Activated B cell treated with CpG ODN at 0.5 μM for 24 hours (primary cell): ENCODE measurements at regions of chr6 and their contacts with region 1.

Region 1: DNA sequence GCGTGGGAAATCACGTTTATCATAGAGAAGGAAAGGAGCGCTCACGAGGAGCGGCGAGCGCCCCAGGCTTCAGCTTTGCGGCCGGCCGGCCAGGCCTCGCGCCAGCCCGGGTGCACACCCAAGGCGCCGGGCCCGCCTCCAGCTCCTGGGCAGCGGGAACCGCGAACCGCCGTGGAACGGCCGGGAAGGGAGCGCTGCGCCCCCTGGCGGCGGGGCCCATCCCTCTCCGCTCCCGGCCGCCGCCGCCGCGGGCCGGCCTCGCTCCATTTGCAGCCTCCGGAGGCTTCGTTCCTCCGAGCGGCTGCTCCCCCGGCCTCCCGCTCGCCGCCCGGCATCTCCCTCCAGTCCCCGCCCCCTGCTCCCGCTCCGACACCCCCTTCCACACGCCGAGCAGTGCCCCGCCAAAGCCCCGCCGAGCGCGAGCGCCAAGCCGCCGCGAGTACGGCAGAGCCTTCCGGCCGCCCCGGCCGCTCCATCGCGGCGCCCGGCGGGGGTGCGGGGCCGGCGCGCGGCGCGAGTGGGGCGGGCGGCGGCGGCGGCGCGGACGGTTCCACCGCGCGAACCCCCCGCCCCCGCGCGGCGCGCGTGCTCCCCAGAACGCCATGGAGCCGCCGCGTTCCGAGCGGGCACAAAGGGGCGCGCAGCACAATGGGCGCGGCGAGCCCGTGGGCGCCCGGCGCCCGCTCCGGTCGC is 956 bp downstream of the BEND3 start:
- DNase-seq: peak; percentile 79
- ATAC-seq: peak; percentile 51
- H3K4me3 Mint-ChIP-seq: peak overlapping the region; percentile 82
- H3K27ac Mint-ChIP-seq: no peak overlapping the region
- H3K4me1 Mint-ChIP-seq: peaks cover 19% of the 10 kb centered on the region
- H3K27me3 Mint-ChIP-seq: peaks cover 5% of the 10 kb centered on the region
- CTCF ChIP-seq: no peak

Region 2: GRCh38 chr6:106097411-106098231 is 1016.7 kb before region 1 on chr6:
- CTCF ChIA-PET with region 1: no interaction called
- POLR2A ChIA-PET with region 1: no interaction called
- intact Hi-C with region 1: loop called (anchors 10 kb)
- DNase-seq: no peak
- ATAC-seq: peak; percentile 74
- H3K4me3 Mint-ChIP-seq: peak overlapping the region; percentile 89
- H3K27ac Mint-ChIP-seq: peak overlapping the region; percentile 94
- H3K4me1 Mint-ChIP-seq: peaks cover 84% of the 10 kb centered on the region
- H3K27me3 Mint-ChIP-seq: no peaks in the 10 kb centered on the region
- CTCF ChIP-seq: no peak

Region 3: DNA sequence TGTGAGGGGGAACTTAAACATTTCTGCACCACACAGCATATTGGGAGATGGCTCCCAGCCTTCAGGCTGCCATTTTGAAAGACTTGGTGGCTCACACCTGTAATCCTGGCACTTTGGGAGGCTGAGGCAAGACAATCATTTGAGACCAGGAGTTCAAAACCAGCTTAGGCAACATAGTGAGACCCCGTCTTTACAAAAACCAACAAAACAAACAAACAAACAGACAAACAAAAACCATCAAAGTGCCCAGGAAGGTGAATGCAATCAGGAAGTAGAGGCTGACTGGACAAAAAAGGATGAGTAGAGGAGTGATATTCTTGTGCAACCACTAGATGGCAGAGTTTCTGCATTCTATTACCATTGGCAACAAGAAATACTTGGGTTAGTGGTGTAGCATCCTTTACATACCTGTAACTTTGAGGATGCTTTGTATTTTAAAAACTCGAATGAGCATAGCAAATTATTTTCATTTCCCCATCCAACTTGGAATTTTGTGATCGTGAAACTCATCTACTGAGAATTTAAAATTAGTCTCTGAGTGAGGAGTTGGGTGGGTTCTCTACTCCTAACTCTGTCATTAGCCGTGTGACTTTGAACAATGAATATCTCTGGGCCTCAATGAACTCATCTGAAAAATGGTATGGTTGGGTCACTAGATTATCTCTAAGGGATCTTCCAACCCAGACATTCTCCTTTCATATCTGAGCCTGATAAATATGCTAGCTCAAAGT is 669.4 kb before region 1 on chr6:
- CTCF ChIA-PET with region 1: interaction called, 3 read pairs
- POLR2A ChIA-PET with region 1: no interaction called
- intact Hi-C with region 1: loop called (anchors 1 kb)
- DNase-seq: no peak
- ATAC-seq: peak; percentile 43
- H3K4me3 Mint-ChIP-seq: no peak overlapping the region
- H3K27ac Mint-ChIP-seq: no peak overlapping the region
- H3K4me1 Mint-ChIP-seq: peaks cover 16% of the 10 kb centered on the region
- H3K27me3 Mint-ChIP-seq: peaks cover 18% of the 10 kb centered on the region
- CTCF ChIP-seq: peak; percentile 25

Region 4: DNA sequence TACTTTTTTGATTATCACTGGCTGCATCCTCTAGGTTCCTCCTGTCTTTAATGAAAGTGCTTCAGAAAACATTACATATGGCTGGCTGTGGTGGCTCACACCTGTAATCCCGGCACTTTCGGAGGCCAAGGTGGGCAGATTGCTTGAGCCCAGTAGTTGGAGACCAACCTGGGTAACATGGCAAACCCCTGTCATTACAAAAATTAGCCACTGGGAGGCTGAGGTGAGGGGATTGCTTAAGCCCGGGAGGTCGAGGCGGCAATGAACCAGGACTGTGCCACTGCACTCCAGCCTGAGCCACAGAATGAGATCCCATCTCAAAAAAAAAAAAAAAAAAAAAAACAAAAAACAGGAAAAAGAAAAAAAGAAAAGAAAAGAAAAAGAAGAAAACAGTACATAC is 34.3 kb before region 1 on chr6:
- CTCF ChIA-PET with region 1: no interaction called
- POLR2A ChIA-PET with region 1: no interaction called
- intact Hi-C with region 1: loop called (anchors 5 kb)
- DNase-seq: no peak
- ATAC-seq: no peak
- H3K4me3 Mint-ChIP-seq: no peak overlapping the region
- H3K27ac Mint-ChIP-seq: no peak overlapping the region
- H3K4me1 Mint-ChIP-seq: peaks cover 6% of the 10 kb centered on the region
- H3K27me3 Mint-ChIP-seq: no peaks in the 10 kb centered on the region
- CTCF ChIP-seq: no peak

Region 5: GRCh38 chr6:107657755-107658461 is 543.5 kb after region 1 on chr6:
- CTCF ChIA-PET with region 1: no interaction called
- POLR2A ChIA-PET with region 1: no interaction called
- intact Hi-C with region 1: loop called (anchors 5 kb)
- DNase-seq: peak; percentile 70
- ATAC-seq: peak; percentile 89
- H3K4me3 Mint-ChIP-seq: peak overlapping the region; percentile 82
- H3K27ac Mint-ChIP-seq: peak overlapping the region; percentile 96
- H3K4me1 Mint-ChIP-seq: peaks cover 67% of the 10 kb centered on the region
- H3K27me3 Mint-ChIP-seq: no peaks in the 10 kb centered on the region
- CTCF ChIP-seq: no peak

Region 6: GRCh38 chr6:108113557-108114519 is 999.5 kb after region 1 on chr6:
- CTCF ChIA-PET with region 1: no interaction called
- POLR2A ChIA-PET with region 1: no interaction called
- intact Hi-C with region 1: loop called (anchors 5 kb)
- DNase-seq: peak; percentile 25
- ATAC-seq: no peak
- H3K4me3 Mint-ChIP-seq: peak overlapping the region; percentile 79
- H3K27ac Mint-ChIP-seq: no peak overlapping the region
- H3K4me1 Mint-ChIP-seq: peaks cover 47% of the 10 kb centered on the region
- H3K27me3 Mint-ChIP-seq: peaks cover 67% of the 10 kb centered on the region
- CTCF ChIP-seq: no peak